ENCODE measurements at regions of chr18 and their contacts with region 1.

Region 1: DNA sequence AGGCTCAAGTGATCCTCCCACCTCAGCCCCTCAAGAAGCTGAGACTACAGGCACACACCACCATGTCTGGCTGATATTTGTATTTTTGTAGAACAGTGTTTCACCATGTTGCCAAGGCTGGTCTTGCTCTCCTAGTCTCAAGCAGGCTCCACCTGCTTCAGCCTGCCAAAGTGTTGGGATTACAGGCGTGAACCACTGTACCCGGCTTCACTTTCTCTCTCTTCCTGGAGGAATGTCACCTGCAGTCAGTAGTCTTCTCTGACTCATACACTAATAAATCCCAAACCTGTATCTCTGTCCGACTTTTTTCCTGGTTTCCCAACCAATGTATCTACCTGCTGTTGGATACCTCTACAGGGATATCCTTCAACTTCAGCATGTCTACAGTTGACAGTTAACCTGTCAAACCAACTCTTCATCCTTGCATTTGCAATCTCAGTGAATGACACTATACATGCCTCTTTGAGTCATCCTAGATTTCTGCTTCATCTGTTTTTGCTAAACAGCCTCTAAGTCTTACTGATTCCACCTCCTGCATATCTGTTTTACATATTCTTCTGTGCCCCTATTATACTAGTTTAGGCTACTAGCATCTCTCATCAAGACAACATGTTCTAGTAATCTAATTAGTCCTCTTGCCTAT is 54.5 kb downstream of the RBBP8 start:
- DNase-seq: no peak

Region 2: GRCh38 chr18:22282311-22283112 is 705.2 kb before region 1 on chr18:
- intact Hi-C with region 1: no loop called
- DNase-seq: no peak

Region 3: DNA sequence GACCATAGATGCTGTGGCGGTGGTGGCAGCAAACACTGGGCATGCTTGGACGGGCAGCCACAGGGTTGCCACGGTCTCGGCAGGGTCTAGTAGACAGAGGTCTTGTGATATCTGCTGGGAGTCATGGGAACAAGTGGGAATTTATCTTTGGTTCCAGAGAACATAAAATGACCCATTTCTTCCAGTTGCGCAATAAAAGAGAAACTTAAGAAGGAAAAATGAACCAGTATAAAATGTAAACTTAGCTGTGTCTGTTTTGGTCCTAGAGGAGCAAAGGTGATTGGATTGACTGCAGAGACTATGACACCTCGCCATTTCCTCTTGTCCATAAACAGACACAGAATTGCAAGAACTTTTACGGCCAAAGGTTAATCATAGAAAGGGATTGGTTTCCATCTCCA is 187.1 kb before region 1 on chr18:
- intact Hi-C with region 1: loop called (anchors 5 kb)
- DNase-seq: no peak

Region 4: DNA sequence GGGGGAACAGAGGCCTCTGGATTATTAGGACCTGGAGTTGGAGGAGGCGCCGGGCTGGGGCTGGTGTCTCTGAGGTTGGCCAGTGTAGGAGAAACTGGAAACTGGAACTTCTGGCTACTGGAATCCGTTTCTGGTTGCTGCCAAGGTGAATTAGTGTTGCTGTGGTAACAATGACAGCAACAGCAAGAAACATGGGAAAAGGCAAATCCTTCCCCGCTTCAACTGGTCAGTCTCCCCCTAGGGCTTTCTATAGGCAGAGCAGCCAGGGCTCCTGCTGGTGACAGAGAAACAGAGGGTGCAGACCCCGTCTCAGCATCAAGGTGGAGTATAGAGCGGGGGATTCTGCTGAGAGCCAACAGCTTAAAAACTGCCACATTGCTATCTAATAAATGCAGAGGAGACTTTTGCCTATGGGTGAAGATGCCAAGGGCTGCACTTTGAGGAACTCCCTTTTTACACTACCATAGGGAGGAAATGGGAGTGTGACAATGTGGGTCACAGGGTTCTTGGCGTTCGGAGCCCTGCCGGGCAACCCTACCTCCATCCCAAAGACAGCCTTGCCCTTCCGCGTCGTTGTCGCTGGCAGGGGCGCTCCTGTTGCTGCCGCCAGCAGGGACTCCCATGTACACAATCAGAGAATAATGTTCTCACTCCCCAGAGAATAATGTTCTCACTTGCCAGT is 66.2 kb after region 1 on chr18:
- intact Hi-C with region 1: no loop called
- DNase-seq: peak in 4 of 42 donors; percentile 6 to 48 (median 11)